ENCODE measurements at regions of chr12 and their contacts with region 1.

Region 1: DNA sequence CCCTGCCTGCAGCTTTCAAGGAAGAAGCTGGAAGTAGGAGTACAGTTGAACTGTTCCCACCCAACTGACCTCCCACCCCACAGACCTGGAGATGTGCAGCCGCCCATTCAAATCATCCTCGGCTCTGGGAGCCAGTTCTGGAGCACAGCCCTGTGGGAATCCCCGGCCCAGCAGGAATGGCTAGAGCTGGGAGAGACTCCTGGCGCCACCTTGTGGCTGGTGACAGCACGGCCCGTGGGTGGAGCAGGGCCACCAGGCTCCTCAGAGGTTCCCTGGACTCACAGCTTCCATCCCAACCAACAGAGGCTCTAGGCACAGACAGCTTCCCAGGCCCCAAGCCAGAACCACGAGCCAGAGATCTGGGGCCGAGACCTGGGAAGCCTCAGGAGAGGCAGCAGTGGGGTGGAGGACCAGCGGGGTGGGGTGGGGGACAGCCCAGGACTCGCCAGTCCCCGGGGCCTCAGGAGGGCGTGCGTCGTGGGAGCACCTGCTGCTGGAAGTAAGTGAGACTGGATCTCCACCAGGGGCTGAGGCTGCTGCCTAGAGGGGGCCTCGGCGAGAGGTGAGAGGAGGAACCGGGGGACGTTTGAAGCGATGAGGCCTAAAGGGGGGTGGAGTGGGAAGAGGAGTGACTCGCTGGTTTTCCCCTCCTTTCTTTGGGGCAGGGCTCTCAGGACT is 43.4 kb downstream of the RNF34 start:
- DNase-seq: peak; percentile 80
- H3K4me3 Mint-ChIP-seq: no peak overlapping the region
- H3K27ac Mint-ChIP-seq: no peak overlapping the region
- H3K4me1 Mint-ChIP-seq: peaks cover 2% of the 10 kb centered on the region
- H3K27me3 Mint-ChIP-seq: no peaks in the 10 kb centered on the region

Region 2: DNA sequence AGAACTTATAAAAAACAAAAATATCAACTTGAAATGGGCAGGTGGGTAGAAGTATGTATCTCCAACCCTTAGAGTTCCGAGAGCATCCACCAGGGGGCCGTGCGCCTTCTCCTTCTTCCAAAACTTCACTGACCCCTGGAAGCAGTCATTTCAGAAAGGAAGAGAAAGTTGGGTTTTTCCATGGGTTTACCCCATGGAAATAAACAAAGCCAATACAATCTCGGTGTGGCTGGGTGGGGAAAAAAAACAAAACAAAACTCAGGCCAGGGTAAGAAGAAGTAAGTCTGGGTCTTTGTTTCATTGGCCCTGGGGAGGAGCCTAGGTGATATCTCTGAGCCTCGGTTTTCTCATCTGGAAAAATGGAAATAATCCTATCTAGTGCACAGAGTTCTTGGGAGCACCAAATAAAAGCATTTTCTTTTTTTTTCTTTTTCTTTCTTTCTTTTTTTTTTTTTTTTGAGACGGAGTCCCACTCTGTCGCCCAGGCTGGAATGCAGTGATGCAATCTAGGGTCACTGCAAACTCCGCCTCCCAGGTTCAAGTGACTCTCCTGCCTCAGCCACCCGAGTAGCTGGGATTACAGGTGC is 498.6 kb before region 1 on chr12:
- CTCF ChIA-PET with region 1: no interaction called
- POLR2A ChIA-PET with region 1: no interaction called
- intact Hi-C with region 1: no loop called
- DNase-seq: peak; percentile 81
- H3K4me3 Mint-ChIP-seq: no peak overlapping the region
- H3K27ac Mint-ChIP-seq: peak overlapping the region; percentile 9
- H3K4me1 Mint-ChIP-seq: peaks cover 7% of the 10 kb centered on the region
- H3K27me3 Mint-ChIP-seq: no peaks in the 10 kb centered on the region

Region 3: DNA sequence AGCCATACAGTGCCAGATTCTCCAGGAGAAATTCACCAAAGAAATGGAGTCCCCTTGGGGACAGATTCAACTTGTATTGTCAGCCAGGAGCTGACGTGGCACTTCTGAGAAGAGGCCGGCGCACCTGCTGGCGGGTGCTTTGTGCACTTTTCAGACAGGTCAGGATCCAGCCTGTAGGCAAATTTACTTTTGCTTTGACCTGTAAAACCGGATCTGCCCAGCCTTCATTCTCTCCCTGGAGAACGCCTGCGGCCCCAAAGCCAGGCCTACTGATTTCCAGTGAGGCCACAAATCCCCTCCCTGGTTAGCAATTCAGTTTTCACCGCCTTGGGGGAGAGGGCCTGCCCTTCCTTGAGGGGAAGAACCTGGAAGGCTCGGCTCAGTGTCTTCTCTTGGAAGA is 216.0 kb before region 1 on chr12:
- CTCF ChIA-PET with region 1: no interaction called
- POLR2A ChIA-PET with region 1: no interaction called
- intact Hi-C with region 1: no loop called
- DNase-seq: peak; percentile 36
- H3K4me3 Mint-ChIP-seq: no peak overlapping the region
- H3K27ac Mint-ChIP-seq: peak overlapping the region; percentile 70
- H3K4me1 Mint-ChIP-seq: peaks cover 43% of the 10 kb centered on the region
- H3K27me3 Mint-ChIP-seq: no peaks in the 10 kb centered on the region

Region 4: GRCh38 chr12:121323908-121324307 is 119.4 kb before region 1 on chr12:
- CTCF ChIA-PET with region 1: interaction called, 11 read pairs
- POLR2A ChIA-PET with region 1: no interaction called
- intact Hi-C with region 1: no loop called
- DNase-seq: no peak
- H3K4me3 Mint-ChIP-seq: no peak overlapping the region
- H3K27ac Mint-ChIP-seq: peak overlapping the region; percentile 0
- H3K4me1 Mint-ChIP-seq: no peaks in the 10 kb centered on the region
- H3K27me3 Mint-ChIP-seq: no peaks in the 10 kb centered on the region

Region 5: DNA sequence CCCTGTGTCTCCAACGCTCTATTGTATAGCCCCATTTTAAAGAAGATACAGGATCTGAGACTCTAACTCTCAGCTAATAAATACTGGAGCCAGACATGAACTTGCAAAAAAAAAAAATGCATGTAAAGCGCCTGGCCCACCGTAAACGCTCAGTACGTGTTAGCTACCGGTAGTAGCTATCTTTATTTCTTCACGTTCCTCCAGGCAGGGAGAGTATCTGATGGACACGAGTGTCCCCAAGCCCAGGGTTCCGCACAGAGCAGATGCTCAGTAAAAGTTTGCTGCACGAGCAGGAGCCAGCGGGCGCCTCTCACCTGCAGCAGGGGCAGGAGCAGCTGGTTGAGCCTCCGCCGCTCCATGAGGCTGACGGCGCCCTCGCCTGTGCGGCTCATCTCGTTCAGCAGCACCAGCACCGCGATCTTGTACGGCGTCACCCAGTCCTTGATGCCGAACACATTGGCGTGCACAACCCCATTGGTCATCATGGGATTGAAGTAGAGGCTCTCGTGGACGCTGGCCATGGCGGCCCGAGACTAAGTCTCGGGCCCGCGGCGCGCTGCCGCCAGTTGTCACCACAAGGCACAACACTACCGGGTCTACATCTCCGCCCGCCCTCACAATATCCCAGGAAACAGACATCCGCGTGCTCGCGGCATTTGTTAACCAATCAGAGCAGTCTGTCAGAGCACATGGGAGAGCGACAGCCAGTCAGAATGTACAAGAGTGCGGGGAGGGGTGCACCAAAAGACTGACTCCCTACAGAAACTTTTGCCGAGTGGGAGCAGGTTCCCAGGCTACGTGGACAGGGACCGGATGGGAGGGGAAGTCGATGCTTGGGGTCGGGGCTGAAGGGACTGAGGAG is 91.3 kb before region 1 on chr12 and contains the start of gene ANAPC5:
- CTCF ChIA-PET with region 1: interaction called, 22 read pairs
- POLR2A ChIA-PET with region 1: no interaction called
- intact Hi-C with region 1: no loop called
- DNase-seq: peak; percentile 96
- H3K4me3 Mint-ChIP-seq: peak within 1 kb of the TSS; percentile 90
- H3K27ac Mint-ChIP-seq: peak within 1 kb of the TSS; percentile 86
- H3K4me1 Mint-ChIP-seq: peaks cover 24% of the 10 kb centered on the region
- H3K27me3 Mint-ChIP-seq: no peaks in the 10 kb centered on the region
- total RNA-seq, gene ANAPC5: 112 to 120 TPM

Region 6: DNA sequence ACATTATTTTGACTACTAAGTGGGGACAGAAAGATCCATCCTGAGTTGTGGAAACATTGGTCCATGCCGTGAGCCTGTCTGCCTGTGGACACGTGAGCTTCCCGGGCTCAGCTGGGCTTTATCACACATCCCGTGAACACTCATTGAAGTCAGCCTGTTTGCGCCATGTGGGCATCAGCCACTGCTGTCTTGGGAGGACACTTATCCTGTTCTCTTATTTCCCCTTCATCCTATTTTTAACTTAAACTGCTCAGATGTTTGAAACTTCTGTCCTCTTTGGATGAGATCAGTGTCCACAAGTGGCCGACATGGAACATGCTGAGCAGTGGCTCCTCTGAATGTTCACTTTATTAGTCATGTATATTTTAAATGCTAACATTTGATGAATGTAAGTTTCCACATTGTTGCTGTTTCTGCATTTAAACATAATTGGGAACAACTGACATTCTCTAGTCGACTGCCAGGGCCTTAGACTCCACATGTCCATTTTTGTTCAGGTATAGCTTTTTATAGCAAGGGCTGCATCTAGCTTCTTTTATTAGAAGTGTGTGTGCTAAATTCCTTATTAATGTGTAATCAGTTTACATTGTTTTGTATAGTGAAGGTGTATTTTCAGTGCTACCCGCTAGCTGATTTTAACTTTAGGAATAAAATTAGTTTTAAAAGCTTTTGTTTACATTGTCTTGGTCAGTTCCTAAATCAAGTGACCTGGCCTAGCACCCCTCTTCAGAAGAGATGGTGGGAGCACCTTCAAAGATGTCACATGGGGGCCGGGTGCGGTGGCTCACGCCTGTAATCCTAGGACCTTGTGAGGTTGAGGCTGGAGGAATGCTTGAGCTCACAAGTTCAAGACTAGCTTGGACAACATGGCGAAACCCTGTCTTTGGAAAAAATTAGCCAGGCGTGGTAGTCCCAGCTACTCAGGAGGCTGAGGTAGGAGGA is 19.4 kb before region 1 on chr12:
- CTCF ChIA-PET with region 1: interaction called, 53 read pairs
- POLR2A ChIA-PET with region 1: interaction called, 4 read pairs
- intact Hi-C with region 1: no loop called
- DNase-seq: no peak
- H3K4me3 Mint-ChIP-seq: no peak overlapping the region
- H3K27ac Mint-ChIP-seq: no peak overlapping the region
- H3K4me1 Mint-ChIP-seq: no peaks in the 10 kb centered on the region
- H3K27me3 Mint-ChIP-seq: no peaks in the 10 kb centered on the region

Region 7: DNA sequence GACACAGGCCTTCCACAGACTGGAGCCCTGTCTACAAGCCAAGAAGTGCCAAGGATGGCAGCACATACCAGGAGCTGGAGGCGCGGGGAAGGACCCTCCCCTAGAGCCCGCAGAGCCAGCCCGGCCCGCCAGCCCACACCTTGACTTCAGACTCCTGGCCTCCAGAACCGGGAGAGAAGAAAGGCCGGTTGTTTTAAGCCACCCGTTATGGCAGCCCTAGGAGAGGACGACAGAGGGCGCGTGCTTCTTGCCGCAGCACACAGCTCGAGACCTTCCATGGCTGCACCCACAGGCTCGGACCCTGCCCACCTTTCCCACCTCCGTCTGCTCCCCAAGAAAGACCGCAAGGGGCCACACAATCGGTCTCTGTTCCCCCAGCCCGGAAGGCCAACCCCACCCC is 10.3 kb after region 1 on chr12:
- CTCF ChIA-PET with region 1: interaction called, 12 read pairs
- POLR2A ChIA-PET with region 1: interaction called, 5 read pairs
- intact Hi-C with region 1: no loop called
- DNase-seq: no peak
- H3K4me3 Mint-ChIP-seq: no peak overlapping the region
- H3K27ac Mint-ChIP-seq: no peak overlapping the region
- H3K4me1 Mint-ChIP-seq: peaks cover 31% of the 10 kb centered on the region
- H3K27me3 Mint-ChIP-seq: no peaks in the 10 kb centered on the region

Region 8: GRCh38 chr12:121467115-121467793 is 23.9 kb after region 1 on chr12:
- CTCF ChIA-PET with region 1: interaction called, 23 read pairs
- POLR2A ChIA-PET with region 1: no interaction called
- intact Hi-C with region 1: no loop called
- DNase-seq: peak; percentile 91
- H3K4me3 Mint-ChIP-seq: peak overlapping the region; percentile 29
- H3K27ac Mint-ChIP-seq: peak overlapping the region; percentile 13
- H3K4me1 Mint-ChIP-seq: peaks cover 19% of the 10 kb centered on the region
- H3K27me3 Mint-ChIP-seq: no peaks in the 10 kb centered on the region

Region 9: GRCh38 chr12:121688966-121689365 is 245.6 kb after region 1 on chr12:
- CTCF ChIA-PET with region 1: no interaction called
- POLR2A ChIA-PET with region 1: no interaction called
- intact Hi-C with region 1: no loop called
- DNase-seq: no peak
- H3K4me3 Mint-ChIP-seq: no peak overlapping the region
- H3K27ac Mint-ChIP-seq: no peak overlapping the region
- H3K4me1 Mint-ChIP-seq: peaks cover 6% of the 10 kb centered on the region
- H3K27me3 Mint-ChIP-seq: no peaks in the 10 kb centered on the region

Measured in activated CD4-positive, alpha-beta memory T cell treated with anti-CD3 and anti-CD28 coated beads for 36 hours (primary cell).